ENCODE measurements at regions of chr2 and their contacts with region 1.

Region 1: DNA sequence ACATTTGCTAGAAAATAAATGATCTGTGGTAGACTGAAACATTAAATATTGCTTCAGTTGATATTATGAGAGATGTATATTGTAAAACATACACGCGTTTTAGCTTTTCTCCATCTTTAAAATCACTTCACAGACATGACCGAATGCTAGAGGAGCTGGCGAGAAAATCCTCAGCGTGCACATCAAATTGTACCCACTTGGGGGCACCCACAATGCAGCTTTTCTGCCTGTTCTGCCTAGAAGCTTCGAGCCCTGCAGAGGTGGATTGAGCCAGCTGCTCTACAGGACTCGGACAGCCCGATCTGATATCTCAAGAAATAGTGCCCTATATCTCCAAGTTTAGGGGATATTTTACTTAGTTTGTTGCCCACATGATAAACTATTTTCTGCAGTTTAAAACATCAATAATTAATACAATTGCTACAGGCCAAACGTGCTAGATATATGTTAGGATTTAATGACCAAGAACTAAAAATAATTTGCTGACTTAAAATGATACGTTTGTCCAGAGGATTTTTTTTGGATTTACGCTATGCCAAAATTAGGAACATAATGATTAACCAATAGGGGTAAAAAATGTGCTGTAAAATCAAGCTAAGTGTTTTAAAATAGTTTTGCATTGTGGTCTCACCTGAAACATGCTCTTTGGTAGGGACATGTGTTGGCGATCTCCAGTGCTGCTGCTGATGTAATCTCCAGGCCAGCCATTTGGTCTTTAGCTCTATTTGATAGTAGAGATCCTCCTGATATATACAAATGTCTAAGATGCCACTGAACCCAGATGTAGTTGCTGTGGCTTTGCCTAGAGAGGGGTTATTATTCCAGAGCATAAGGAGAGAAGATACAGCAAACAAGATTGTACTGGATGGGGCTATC is 22.3 kb upstream of the ATP5MC3 start:
- DNase-seq: peak; percentile 16 to 40
- ATAC-seq: peak in 7 of 8 donors; percentile 46 to 83 (median 67)
- H3K4me3 ChIP-seq: no peak overlapping the region
- H3K27ac ChIP-seq: no peak overlapping the region
- H3K4me1 ChIP-seq: peaks cover 0 to 6% (median 0%) of the 10 kb centered on the region in 9 donors
- H3K27me3 ChIP-seq: peaks cover 0 to 20% (median 0%) of the 10 kb centered on the region in 7 donors
- CTCF ChIP-seq: peak in 8 of 9 donors; percentile 20 to 59 (median 50)

Region 2: GRCh38 chr2:175275539-175275938 is 71.7 kb after region 1 on chr2:
- intact Hi-C with region 1: loop called in 3 of 10 experiments (anchors 5 to 10 kb)
- DNase-seq: no peak
- ATAC-seq: peak in 3 of 8 donors; percentile 39 to 76 (median 75)
- H3K4me3 ChIP-seq: no peak overlapping the region
- H3K27ac ChIP-seq: no peak overlapping the region
- H3K4me1 ChIP-seq: peaks cover 0 to 6% (median 0%) of the 10 kb centered on the region in 9 donors
- H3K27me3 ChIP-seq: peaks cover 0 to 11% (median 0%) of the 10 kb centered on the region in 7 donors
- CTCF ChIP-seq: no peak

Region 3: DNA sequence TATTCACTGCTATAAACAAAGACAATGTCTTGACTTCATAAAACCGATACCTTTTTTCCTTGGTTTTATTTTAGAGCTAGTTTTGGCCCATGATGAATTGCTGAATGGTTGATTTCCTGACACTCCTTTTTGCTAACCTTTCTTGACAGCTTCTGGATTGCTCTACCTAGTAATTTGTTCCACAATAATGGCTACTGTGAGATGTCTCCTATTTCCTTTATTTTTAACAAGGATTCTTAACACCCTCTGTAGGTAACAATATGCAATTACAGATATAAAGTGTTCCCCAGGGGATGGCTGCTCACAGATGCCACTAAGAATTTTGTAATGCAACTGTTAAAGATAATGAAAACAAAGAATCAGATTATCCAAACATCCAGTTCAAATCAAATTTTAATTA is 78.4 kb after region 1 on chr2:
- intact Hi-C with region 1: loop called in 3 of 10 experiments (anchors 5 to 10 kb)
- DNase-seq: no peak
- ATAC-seq: peak in 5 of 8 donors; percentile 42 to 69 (median 52)
- H3K4me3 ChIP-seq: no peak overlapping the region
- H3K27ac ChIP-seq: no peak overlapping the region
- H3K4me1 ChIP-seq: no peaks in the 10 kb centered on the region
- H3K27me3 ChIP-seq: peaks cover 0 to 7% (median 0%) of the 10 kb centered on the region in 7 donors
- CTCF ChIP-seq: peak in 8 of 9 donors; percentile 24 to 65 (median 55)